K562 (cell line): ENCODE measurements at regions of chr14 and their contacts with region 1.

Region 1: DNA sequence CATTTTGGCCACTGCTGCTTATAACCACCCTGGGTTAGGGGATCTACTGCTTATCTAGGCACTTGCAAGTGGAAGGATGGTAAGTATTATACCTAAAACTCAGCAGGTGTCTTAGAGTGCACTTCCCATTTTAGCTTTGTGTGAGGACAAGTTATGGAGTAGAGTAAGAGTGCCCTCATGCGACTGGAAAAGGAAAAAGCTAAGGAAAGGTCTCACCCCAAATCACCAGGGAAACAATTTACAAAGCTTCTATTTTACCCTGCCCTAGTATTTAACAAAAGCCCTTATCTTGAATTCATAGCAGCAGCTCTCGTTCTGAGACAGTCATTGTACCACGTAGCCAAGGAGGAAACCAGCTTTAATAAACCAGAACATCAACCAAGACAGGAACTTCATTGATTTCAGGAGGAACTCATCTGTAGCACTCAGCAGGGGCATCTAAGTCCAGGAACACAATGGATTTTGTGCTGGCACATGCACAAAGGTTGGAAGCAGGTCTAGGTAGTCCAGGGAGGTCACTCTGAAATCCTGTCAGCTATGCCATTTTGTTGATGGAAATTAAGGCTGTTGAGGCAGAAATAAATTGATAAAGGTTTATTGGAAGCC is 2.9 kb downstream of the RDH12 start:
- DNase-seq: peak; percentile 18 to 71 (median 38)
- ATAC-seq: peak; percentile 91
- H3K4me3 ChIP-seq: no peak overlapping the region
- H3K27ac ChIP-seq: no peak overlapping the region
- H3K4me1 ChIP-seq: no peaks in the 10 kb centered on the region; a peak in 1 of 5 replicates
- H3K27me3 ChIP-seq: no peaks in the 10 kb centered on the region
- CTCF ChIP-seq: peak; percentile 58 to 84 (median 65); a peak in 5 of 6 replicates
- EP300 ChIP-seq: no peak
- POLR2A ChIP-seq: no peak
- RAD21 ChIP-seq: peak; percentile 87 to 91

Region 2: GRCh38 chr14:67031920-67032774 is 672.4 kb before region 1 on chr14:
- CTCF ChIA-PET with region 1: no interaction called
- POLR2A ChIA-PET with region 1: no interaction called
- in situ Hi-C with region 1: no loop called
- intact Hi-C with region 1: no loop called
- DNase-seq: no peak
- ATAC-seq: no peak
- H3K4me3 ChIP-seq: no peak overlapping the region
- H3K27ac ChIP-seq: no peak overlapping the region
- H3K4me1 ChIP-seq: no peaks in the 10 kb centered on the region
- H3K27me3 ChIP-seq: no peaks in the 10 kb centered on the region
- CTCF ChIP-seq: no peak
- EP300 ChIP-seq: no peak
- POLR2A ChIP-seq: no peak
- RAD21 ChIP-seq: no peak

Region 3: DNA sequence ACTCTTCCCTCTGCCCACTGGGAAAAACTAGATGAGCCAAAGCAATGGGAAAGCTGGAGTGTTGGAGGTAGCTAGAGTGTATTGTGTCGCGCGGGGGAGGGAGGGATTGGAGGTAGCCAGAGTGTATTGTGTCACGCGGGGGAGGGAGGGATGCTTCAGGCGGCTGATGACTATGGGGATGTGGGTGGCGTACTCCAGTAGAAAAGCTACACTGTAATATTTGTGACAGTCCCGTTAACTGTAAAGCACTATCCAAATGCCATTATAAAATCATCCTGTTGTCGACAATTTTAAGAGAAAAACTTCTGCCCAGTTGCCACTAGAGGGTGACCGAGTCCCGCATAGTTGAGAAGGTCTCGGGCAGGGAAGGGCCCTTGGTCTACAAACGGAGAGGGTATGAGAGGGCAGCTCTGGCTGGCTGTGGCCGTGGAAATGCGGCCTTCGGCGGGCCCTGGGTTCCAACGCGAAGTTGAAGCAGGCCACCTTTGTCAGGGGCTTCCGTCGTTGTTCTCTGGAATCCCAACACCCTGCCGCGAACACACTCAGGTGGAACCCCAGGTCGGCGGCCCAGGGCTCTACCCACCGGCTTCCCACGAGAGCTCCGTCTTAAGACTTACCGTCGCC is 277.5 kb before region 1 on chr14:
- CTCF ChIA-PET with region 1: no interaction called
- POLR2A ChIA-PET with region 1: no interaction called
- in situ Hi-C with region 1: loop called (anchors 10 kb)
- intact Hi-C with region 1: loop called (anchors 5 kb)
- DNase-seq: peak; percentile 62 to 76 (median 66)
- ATAC-seq: peak; percentile 86
- H3K4me3 ChIP-seq: no peak overlapping the region
- H3K27ac ChIP-seq: no peak overlapping the region; the same call in 2 of the 3 replicates
- H3K4me1 ChIP-seq: peaks cover 14 to 30% of the 10 kb centered on the region in 2 experiments; a peak in 4 of 5 replicates
- H3K27me3 ChIP-seq: no peaks in the 10 kb centered on the region; a peak in 1 of 5 replicates
- CTCF ChIP-seq: peak; percentile 69 to 77 (median 75)
- EP300 ChIP-seq: no peak
- POLR2A ChIP-seq: no peak
- RAD21 ChIP-seq: peak; percentile 54 to 75

Region 4: DNA sequence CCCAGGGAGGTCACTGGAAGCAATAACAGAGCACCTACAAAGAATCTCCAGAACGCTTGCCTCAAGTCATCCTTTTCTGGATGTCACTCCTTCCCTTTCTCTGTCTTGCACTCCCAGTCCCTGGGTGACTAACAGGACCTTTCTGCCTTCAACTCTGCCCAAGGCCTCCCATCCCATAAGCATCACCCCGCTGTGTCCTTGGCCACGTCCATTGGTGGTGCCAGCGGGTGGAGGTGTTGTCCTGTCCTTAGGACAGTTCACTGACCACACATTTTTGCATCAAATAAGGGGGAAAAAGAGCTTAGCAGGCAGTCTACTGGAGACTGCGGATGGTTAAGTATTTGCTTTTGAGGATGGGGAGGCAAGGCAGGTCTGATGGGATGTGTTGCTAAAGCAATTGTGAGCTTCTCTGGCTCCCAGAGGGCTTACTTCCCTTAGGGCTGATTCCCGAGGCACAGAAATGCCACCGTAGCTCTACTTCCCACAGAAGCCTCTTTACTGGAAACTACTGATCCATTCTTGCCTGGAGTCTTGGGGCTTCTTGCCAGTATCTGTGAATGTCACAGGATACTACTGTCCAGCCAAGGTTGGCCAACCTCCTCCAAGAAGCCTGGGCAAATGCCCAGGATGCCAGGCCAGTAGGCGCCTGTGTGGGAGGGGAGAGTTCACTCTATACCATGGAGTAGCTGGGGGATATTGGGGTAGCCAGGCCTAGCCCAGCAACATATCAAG is 268.8 kb before region 1 on chr14:
- CTCF ChIA-PET with region 1: no interaction called
- POLR2A ChIA-PET with region 1: no interaction called
- in situ Hi-C with region 1: loop called (anchors 10 kb)
- intact Hi-C with region 1: no loop called
- DNase-seq: no peak
- ATAC-seq: no peak
- H3K4me3 ChIP-seq: no peak overlapping the region
- H3K27ac ChIP-seq: no peak overlapping the region
- H3K4me1 ChIP-seq: no peaks in the 10 kb centered on the region; a peak in 2 of 5 replicates
- H3K27me3 ChIP-seq: peaks cover 7 to 26% of the 10 kb centered on the region in 2 experiments; a peak in 4 of 5 replicates
- CTCF ChIP-seq: no peak
- EP300 ChIP-seq: no peak
- POLR2A ChIP-seq: no peak
- RAD21 ChIP-seq: no peak

Region 5: DNA sequence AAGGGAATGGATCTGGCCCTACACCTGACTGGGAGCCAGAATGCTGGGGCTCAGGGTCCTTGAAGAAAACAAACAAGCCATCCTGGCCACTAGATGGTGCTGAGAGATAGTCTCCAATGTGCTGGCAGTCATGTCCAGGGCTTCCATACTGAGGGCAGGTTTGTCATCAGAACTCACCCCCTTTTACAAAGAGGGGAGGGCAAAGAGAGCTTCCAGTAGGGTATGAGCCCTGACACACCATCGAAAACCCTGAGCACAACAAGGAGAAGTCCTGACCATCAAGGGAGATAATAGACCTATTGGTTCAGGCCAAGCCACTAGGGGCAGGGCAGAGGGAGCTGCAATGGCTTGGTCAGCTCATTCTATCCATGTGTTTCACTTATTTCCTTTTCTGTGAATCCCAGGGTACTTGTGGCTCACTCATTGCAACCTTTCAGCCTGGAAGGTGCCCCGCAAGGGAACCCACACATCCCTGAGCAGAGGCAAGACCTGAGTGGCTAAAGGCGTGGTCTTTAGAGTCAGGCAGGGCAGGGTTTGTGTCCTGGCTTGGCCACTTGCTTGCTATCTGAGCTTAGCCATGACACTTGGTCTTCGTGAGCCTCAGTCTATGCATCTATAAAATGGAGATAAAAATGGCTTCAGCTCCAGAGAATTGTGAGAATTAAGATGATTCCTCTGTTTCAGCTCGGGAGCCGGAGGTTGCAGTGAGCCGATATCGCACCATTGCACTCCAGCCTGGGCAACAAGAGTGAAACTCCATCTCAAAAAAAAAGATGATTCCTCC is 177.7 kb before region 1 on chr14:
- CTCF ChIA-PET with region 1: interaction called, 3 read pairs
- POLR2A ChIA-PET with region 1: no interaction called
- in situ Hi-C with region 1: no loop called
- intact Hi-C with region 1: loop called (anchors 1 kb)
- DNase-seq: peak; percentile 49 to 68 (median 54)
- ATAC-seq: peak; percentile 94
- H3K4me3 ChIP-seq: no peak overlapping the region
- H3K27ac ChIP-seq: no peak overlapping the region
- H3K4me1 ChIP-seq: no peaks in the 10 kb centered on the region; a peak in 1 of 5 replicates
- H3K27me3 ChIP-seq: peaks cover 6 to 21% of the 10 kb centered on the region in 2 experiments; a peak in 3 of 5 replicates
- CTCF ChIP-seq: peak; percentile 75 to 90 (median 86)
- EP300 ChIP-seq: no peak
- POLR2A ChIP-seq: no peak
- RAD21 ChIP-seq: peak; percentile 63 to 84

Region 6: GRCh38 chr14:67583711-67584644 is 120.6 kb before region 1 on chr14:
- CTCF ChIA-PET with region 1: interaction called, 14 read pairs
- POLR2A ChIA-PET with region 1: interaction called, 14 read pairs
- in situ Hi-C with region 1: loop called (anchors 10 kb)
- intact Hi-C with region 1: loop called (anchors 1 kb)
- DNase-seq: peak; percentile 57 to 72 (median 66)
- ATAC-seq: peak; percentile 94
- H3K4me3 ChIP-seq: no peak overlapping the region
- H3K27ac ChIP-seq: no peak overlapping the region
- H3K4me1 ChIP-seq: peaks cover 0 to 6% of the 10 kb centered on the region in 2 experiments; a peak in 2 of 5 replicates
- H3K27me3 ChIP-seq: no peaks in the 10 kb centered on the region
- CTCF ChIP-seq: peak; percentile 72 to 83 (median 78)
- EP300 ChIP-seq: no peak
- POLR2A ChIP-seq: no peak
- RAD21 ChIP-seq: peak; percentile 90 to 94

Region 7: DNA sequence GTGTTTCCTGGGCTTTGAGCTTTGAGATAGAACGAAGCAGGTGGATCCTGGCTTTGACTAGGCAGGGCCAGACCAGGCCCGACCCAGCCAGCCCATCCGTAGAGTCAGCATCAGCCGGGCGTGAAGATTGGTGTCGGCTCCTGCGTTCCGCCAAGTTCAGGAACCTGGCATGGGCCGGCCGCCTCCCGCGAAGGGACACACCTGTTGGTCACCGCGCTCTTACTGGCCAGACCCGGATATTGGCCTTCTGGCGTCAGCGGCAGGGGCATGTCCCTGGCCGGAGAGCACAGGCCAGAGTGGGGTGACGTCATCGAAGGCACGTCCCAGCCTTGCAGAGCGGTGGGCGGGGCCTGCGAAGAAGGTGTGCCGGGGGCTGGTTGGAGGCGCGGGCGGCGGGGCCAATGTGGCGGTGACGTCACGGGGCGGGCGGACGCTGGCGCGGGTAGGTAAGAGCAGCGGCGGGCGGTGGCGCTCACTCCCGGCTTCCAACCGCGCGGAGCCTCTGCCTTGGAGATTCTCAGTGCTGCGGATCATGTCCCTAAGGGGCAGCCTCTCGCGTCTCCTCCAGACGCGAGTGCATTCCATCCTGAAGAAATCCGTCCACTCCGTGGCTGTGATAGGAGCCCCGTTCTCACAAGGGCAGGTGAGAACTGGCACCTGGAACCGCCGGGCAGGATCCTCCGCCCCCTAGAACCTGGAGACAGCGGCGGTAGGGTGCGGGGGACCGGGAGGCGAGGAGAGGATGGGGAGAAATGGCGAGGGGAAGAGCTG is 85.0 kb before region 1 on chr14 and contains the start of gene ARG2:
- CTCF ChIA-PET with region 1: interaction called, 19 read pairs
- POLR2A ChIA-PET with region 1: interaction called, 6 read pairs
- in situ Hi-C with region 1: no loop called
- intact Hi-C with region 1: loop called (anchors 1 kb)
- DNase-seq: peak; percentile 94 to 96 (median 96)
- ATAC-seq: peak; percentile 94
- H3K4me3 ChIP-seq: peak within 1 kb of the TSS; percentile 78
- H3K27ac ChIP-seq: peak within 1 kb of the TSS; percentile 73
- H3K4me1 ChIP-seq: peaks cover 14 to 25% of the 10 kb centered on the region in 2 experiments; a peak in 4 of 5 replicates
- H3K27me3 ChIP-seq: no peaks in the 10 kb centered on the region
- CTCF ChIP-seq: peak in 2 of 3 experiments; percentile 34 to 46; a peak in 3 of 6 replicates
- EP300 ChIP-seq: no peak
- POLR2A ChIP-seq: peak; percentile 74
- RAD21 ChIP-seq: peak; percentile 24 to 48; a peak in 2 of 4 replicates
- polyA plus RNA-seq, gene ARG2: 23.2 to 26.7 TPM

Region 8: DNA sequence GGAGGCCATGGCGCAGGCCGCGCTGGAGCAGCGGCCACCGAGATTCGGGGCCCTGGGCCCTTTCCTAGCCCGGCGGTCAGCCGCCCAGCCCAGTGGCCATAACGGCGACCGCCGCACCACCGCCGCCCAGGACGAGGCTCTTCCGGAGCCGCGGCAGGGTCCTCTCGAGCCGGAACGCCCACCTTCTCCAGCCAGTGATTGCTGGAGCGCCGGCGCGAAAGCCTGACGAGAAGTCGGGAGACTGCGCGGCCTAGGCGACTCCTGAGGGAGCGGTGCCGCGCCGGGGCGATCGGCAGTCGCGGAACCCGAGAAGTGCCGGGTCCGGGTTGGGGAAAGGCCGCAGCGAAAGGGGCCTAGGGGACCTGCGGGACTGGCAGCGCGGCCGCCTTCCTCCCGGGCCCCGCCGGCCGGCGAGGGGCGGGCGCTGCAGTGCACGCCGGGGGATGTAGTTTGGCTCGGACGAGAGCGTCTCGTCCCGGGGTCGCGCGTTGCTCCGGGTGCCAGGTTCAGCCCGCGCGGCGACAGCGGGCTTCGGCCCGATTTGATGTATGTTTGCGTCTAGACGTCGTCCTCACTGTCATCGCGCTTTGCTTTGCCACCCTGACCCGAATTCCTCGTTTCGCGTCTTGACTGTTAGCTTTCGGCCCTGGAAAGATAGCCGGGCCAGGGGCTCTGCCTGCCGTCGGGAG is 30.0 kb before region 1 on chr14 and contains the start of gene VTI1B:
- CTCF ChIA-PET with region 1: interaction called, 6 read pairs
- POLR2A ChIA-PET with region 1: no interaction called
- in situ Hi-C with region 1: no loop called
- intact Hi-C with region 1: loop called (anchors 2 kb)
- DNase-seq: peak; percentile 73 to 82 (median 77)
- ATAC-seq: peak; percentile 95
- H3K4me3 ChIP-seq: peak within 1 kb of the TSS; percentile 90
- H3K27ac ChIP-seq: peak within 1 kb of the TSS; percentile 94
- H3K4me1 ChIP-seq: peaks cover 16 to 19% of the 10 kb centered on the region in 2 experiments
- H3K27me3 ChIP-seq: no peaks in the 10 kb centered on the region
- CTCF ChIP-seq: peak; percentile 11 to 33 (median 32); a peak in 2 of 6 replicates
- EP300 ChIP-seq: no peak
- POLR2A ChIP-seq: peak; percentile 77
- RAD21 ChIP-seq: peak; percentile 23 to 28; a peak in 2 of 4 replicates
- polyA plus RNA-seq, gene VTI1B: 7.8 to 8.5 TPM

Region 9: DNA sequence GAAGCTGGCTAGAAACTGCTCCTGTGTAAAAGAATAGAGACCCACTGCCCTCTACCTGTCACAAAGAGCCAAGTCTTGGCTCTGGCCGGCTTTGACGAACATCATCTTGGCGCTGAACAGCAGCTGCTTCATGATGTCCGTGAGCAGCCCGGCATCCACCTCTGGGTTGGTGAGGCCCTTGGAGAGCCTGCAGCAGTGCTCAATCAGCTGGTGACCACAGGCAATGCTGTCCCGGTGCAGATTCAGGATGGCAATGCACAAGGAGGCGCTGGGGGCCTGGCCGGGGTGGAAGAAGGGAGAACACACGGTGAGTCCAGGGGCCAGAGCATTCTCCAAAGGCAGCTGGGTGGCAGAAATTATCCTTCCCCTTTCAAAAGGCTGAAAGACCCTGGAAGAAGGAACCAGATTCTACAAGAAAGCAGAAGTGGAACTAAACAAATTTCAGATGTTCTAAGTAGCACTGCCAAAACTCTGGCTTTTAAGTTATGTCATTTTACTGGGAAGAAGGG is 61.6 kb after region 1 on chr14:
- CTCF ChIA-PET with region 1: no interaction called
- POLR2A ChIA-PET with region 1: no interaction called
- in situ Hi-C with region 1: no loop called
- intact Hi-C with region 1: no loop called
- DNase-seq: no peak
- ATAC-seq: no peak
- H3K4me3 ChIP-seq: no peak overlapping the region
- H3K27ac ChIP-seq: no peak overlapping the region
- H3K4me1 ChIP-seq: no peaks in the 10 kb centered on the region
- H3K27me3 ChIP-seq: no peaks in the 10 kb centered on the region
- CTCF ChIP-seq: peak in 1 of 3 experiments; percentile 33; a peak in 2 of 6 replicates
- EP300 ChIP-seq: no peak
- POLR2A ChIP-seq: no peak
- RAD21 ChIP-seq: no peak